ENCODE measurements at regions of chr5 and their contacts with region 1.

Region 1: DNA sequence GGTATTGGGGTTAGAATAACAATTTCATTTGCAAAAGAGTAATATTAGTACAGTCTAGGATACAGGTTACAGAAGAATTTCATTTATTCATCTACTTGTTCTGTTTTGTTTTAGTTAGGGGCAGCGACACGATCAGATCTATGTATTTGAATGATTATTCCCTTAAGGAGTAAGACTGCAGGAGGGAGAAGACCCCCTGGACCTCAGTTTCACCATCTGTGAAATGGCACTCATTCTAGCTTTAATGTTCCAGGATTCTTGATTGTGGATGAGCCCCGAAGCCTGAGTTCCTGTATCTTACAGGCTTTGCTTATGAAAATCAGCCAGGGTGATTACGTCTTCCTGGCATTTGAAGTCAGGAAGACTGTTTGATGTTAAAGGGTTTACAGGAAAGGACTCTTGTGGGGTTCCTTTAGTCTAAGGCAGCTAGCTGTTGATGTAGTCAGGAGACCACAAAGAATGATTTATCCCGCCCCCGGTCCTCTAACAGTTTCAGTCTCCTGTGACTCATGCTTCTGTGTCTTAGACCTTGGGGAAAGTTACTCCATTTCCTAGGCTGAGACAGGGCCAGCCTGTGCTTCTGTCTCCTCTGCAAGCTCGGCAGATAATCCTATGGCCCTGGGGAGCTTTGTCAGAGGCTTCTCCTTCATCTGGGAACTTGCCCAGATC is 11.5 kb downstream of the SMIM3 start:
- DNase-seq: peak; percentile 88
- H3K4me3 Mint-ChIP-seq: peak overlapping the region; percentile 53
- H3K27ac Mint-ChIP-seq: peak overlapping the region; percentile 93
- H3K4me1 Mint-ChIP-seq: peaks cover 60% of the 10 kb centered on the region
- H3K27me3 Mint-ChIP-seq: no peaks in the 10 kb centered on the region

Region 2: DNA sequence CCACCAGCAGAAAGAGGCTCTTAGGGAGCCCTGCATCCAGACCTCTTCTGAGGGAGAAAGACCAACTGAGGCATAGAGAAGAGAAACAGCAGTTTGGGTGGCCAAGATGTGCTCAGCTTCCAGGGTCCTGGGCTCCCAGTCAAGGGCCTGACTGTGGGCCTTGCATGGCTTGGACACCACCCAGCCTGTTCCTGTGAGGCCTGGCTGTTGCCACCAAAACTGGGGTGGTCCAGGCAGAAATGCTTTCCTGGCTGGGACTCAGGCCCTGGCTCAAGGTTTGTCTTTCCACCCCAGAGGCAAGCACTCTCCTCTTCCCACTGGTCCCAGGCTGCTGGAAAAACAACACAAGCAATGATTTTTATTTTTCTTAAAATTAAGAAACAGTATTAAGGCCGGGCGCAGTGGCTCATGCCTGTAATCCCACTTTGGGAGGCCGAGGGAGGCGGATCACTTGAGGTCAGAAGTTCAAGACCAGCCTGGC is 115.7 kb before region 1 on chr5:
- CTCF ChIA-PET with region 1: no interaction called
- POLR2A ChIA-PET with region 1: no interaction called
- intact Hi-C with region 1: no loop called
- DNase-seq: no peak
- H3K4me3 Mint-ChIP-seq: no peak overlapping the region
- H3K27ac Mint-ChIP-seq: no peak overlapping the region
- H3K4me1 Mint-ChIP-seq: no peaks in the 10 kb centered on the region
- H3K27me3 Mint-ChIP-seq: peaks cover 18% of the 10 kb centered on the region

Region 3: GRCh38 chr5:150758531-150759333 is 31.3 kb before region 1 on chr5 and contains the start of gene DCTN4:
- CTCF ChIA-PET with region 1: interaction called, 4 read pairs
- POLR2A ChIA-PET with region 1: no interaction called
- intact Hi-C with region 1: loop called (anchors 1 kb)
- DNase-seq: peak; percentile 96
- H3K4me3 Mint-ChIP-seq: no peak within 1 kb of the TSS
- H3K27ac Mint-ChIP-seq: no peak within 1 kb of the TSS
- H3K4me1 Mint-ChIP-seq: peaks cover 29% of the 10 kb centered on the region
- H3K27me3 Mint-ChIP-seq: peaks cover 2% of the 10 kb centered on the region
- total RNA-seq, gene DCTN4: 32.2 to 32.9 TPM

Region 4: GRCh38 chr5:150801117-150801927 is 11.2 kb after region 1 on chr5:
- CTCF ChIA-PET with region 1: interaction called, 36 read pairs
- POLR2A ChIA-PET with region 1: no interaction called
- intact Hi-C with region 1: no loop called
- DNase-seq: peak; percentile 16
- H3K4me3 Mint-ChIP-seq: no peak overlapping the region
- H3K27ac Mint-ChIP-seq: no peak overlapping the region
- H3K4me1 Mint-ChIP-seq: peaks cover 13% of the 10 kb centered on the region
- H3K27me3 Mint-ChIP-seq: peaks cover 8% of the 10 kb centered on the region

Measured in activated CD4-positive, alpha-beta memory T cell treated with anti-CD3 and anti-CD28 coated beads for 36 hours (primary cell).